ENCODE measurements at regions of chr16 and their contacts with region 1.

Region 1: GRCh38 chr16:25224731-25225319 is 8.1 kb downstream of the AQP8 start:
- DNase-seq: no peak
- H3K4me3 ChIP-seq: no peak overlapping the region
- H3K27ac ChIP-seq: no peak overlapping the region
- H3K4me1 ChIP-seq: no peaks in the 10 kb centered on the region
- H3K27me3 ChIP-seq: no peaks in the 10 kb centered on the region
- CTCF ChIP-seq: no peak

Region 2: GRCh38 chr16:24906199-24907020 is 318.4 kb before region 1 on chr16:
- CTCF ChIA-PET with region 1: interaction called, 6 read pairs
- dilution Hi-C with region 1: no loop called
- in situ Hi-C with region 1: no loop called
- intact Hi-C with region 1: loop called (anchors 1 kb)
- DNase-seq: no peak
- H3K4me3 ChIP-seq: no peak overlapping the region
- H3K27ac ChIP-seq: no peak overlapping the region
- H3K4me1 ChIP-seq: no peaks in the 10 kb centered on the region
- H3K27me3 ChIP-seq: peaks cover 2% of the 10 kb centered on the region
- CTCF ChIP-seq: peak; percentile 28 to 50

Region 3: GRCh38 chr16:25045696-25046381 is 179.0 kb before region 1 on chr16:
- CTCF ChIA-PET with region 1: no interaction called
- dilution Hi-C with region 1: no loop called
- in situ Hi-C with region 1: loop called (anchors 10 kb)
- intact Hi-C with region 1: no loop called
- DNase-seq: peak; percentile 53
- H3K4me3 ChIP-seq: no peak overlapping the region
- H3K27ac ChIP-seq: no peak overlapping the region
- H3K4me1 ChIP-seq: peaks cover 16% of the 10 kb centered on the region
- H3K27me3 ChIP-seq: no peaks in the 10 kb centered on the region
- CTCF ChIP-seq: no peak

Region 4: GRCh38 chr16:25126820-25127232 is 98.0 kb before region 1 on chr16:
- CTCF ChIA-PET with region 1: interaction called, 7 read pairs
- dilution Hi-C with region 1: no loop called
- in situ Hi-C with region 1: loop called (anchors 10 kb)
- intact Hi-C with region 1: loop called (anchors 1 kb)
- DNase-seq: peak; percentile 93
- H3K4me3 ChIP-seq: no peak overlapping the region
- H3K27ac ChIP-seq: peak overlapping the region; percentile 61
- H3K4me1 ChIP-seq: peaks cover 15% of the 10 kb centered on the region
- H3K27me3 ChIP-seq: no peaks in the 10 kb centered on the region
- CTCF ChIP-seq: peak; percentile 81 to 96

Region 5: DNA sequence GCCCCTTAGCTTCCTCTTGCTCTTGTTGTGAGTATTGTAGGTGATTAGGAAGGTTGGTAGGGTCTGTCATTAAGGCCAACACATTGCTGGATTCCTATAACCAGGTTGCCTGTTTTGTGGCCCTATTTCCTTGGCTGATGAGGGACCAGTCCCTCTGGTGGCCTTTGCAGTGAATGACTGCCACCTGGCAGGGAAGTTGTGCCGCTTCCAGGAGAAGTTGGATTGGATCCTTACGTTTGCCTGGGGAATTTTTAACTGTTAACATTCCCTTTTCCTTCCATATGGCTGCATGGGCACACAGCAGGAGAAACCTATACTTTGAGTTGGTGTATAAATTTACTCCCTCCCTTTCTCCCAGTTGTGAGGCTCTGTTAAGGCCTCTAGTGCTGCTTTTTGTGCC is 80.9 kb before region 1 on chr16:
- CTCF ChIA-PET with region 1: no interaction called
- dilution Hi-C with region 1: no loop called
- in situ Hi-C with region 1: no loop called
- intact Hi-C with region 1: no loop called
- DNase-seq: no peak
- H3K4me3 ChIP-seq: no peak overlapping the region
- H3K27ac ChIP-seq: no peak overlapping the region
- H3K4me1 ChIP-seq: no peaks in the 10 kb centered on the region
- H3K27me3 ChIP-seq: no peaks in the 10 kb centered on the region
- CTCF ChIP-seq: peak; percentile 21 to 40

Region 6: GRCh38 chr16:25157271-25157875 is 67.5 kb before region 1 on chr16:
- CTCF ChIA-PET with region 1: no interaction called
- dilution Hi-C with region 1: no loop called
- in situ Hi-C with region 1: no loop called
- intact Hi-C with region 1: no loop called
- DNase-seq: no peak
- H3K4me3 ChIP-seq: no peak overlapping the region
- H3K27ac ChIP-seq: no peak overlapping the region
- H3K4me1 ChIP-seq: no peaks in the 10 kb centered on the region
- H3K27me3 ChIP-seq: no peaks in the 10 kb centered on the region
- CTCF ChIP-seq: no peak

Region 7: DNA sequence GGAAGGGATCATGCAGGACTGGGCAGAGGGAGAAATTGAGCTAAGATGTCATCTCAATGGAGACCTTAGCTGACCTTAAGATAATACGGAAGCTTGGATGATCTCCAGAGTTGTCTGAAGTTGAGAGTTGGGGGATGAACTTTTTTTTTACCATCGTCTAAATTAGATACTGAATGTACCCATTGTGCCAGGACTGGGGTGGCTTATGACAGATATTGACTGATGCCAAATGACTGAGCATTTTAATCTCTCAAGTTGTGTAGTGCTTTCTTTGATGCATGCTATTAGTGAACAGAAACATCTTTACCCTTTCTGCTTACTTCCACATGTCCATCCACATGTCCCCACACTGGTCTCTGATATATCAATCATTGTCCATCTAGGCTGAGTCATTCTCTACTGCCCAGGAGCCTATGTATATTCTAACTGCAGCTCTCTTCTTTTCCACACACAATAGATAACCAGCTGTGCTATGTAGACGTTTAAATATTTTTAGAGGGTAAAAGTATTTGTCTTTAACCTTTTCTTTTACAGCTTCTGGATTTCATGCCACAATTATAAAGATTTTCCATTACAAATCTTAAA is 93.0 kb after region 1 on chr16:
- CTCF ChIA-PET with region 1: no interaction called
- dilution Hi-C with region 1: no loop called
- in situ Hi-C with region 1: no loop called
- intact Hi-C with region 1: no loop called
- DNase-seq: no peak
- H3K4me3 ChIP-seq: no peak overlapping the region
- H3K27ac ChIP-seq: no peak overlapping the region
- H3K4me1 ChIP-seq: no peaks in the 10 kb centered on the region
- H3K27me3 ChIP-seq: no peaks in the 10 kb centered on the region
- CTCF ChIP-seq: no peak